A673 (cell line): ENCODE measurements at regions of chr17 and their contacts with region 1.

Region 1: DNA sequence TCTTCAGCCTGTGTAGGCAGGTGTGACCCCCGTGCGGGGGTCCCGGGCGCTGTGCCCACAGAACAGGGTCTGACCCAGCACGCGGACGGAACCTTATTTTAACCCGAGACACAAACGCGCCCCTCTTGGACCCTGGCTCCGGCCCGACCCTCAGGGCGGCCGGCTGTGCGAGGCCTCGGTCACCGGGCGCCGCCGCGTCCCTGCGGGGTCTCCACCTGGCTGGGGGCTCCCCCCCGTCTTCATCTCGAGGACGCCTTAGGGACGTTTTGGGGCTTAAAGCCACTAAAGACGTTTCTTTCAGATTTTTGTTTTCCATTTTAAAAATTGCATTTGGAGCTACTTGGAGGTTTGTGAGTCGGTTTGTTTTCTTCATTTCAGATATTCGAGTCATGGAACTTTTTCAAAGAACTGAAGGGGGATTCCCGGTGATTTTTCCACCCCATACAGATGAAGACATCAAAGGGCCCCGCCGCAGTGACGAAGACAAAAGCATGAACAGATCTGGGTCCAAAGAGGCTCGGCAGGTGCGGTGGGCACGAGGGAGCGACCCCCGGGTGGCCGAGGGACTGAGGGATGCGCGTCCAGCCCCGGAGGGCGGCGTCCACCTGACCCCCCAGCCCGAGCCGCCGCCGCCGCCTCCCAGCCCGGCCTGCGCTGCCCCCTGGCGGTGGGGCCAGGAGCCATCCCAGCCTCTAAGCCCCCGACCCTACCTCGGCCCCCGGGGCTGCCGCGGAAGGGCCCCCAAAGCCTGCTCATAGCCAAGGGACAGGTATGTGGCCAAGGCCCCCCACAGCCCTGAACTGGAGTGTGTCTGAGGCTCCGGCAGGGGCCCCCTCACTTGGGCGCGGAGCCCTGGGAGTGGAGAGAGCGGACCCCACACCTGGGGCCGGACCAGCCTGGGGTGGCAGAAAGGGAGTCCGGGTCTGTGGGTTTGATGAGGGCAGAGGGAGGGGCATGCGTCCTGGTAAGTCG is 3.8 kb upstream of the CD7 start:
- DNase-seq: no peak
- H3K4me3 ChIP-seq: no peak overlapping the region
- H3K27ac ChIP-seq: no peak overlapping the region
- H3K4me1 ChIP-seq: no peaks in the 10 kb centered on the region
- H3K27me3 ChIP-seq: no peaks in the 10 kb centered on the region
- CTCF ChIP-seq: peak; percentile 79

Region 2: DNA sequence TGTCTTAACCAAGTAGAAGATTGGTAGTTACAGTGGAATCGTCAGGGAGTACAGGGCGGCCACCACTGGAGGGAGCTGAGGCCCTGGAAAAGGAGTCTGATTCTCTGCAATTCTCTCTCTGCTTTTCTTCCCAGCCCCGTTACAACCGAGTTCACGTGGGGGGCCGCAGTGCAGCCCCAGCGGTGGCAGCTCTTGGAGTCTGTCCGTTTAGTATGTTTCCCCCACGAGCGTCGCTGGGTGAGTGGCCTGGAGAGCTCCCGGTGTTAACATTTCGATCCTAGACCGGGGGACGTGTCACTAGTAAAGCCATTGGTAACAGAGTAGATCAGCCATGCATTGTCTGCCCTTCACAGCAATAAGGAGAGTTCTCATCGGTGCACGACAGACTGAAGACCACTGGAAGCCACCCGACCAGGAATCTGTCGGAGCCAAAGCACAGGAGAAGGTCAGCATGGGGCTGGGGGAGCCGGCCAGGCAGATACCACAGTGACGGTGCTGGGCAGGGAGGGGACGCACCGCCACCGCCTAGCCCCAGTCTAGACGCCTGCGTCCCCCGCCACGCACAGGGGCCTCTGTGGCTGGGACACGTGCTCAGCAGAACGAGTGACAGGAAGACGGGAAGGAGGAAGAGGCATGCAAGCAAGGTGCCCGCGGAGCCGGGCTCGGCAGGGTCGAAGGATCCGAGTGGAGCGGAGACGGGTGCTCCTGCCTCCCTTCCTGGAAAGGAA is 76.7 kb before region 1 on chr17:
- CTCF ChIA-PET with region 1: no interaction called
- POLR2A ChIA-PET with region 1: no interaction called
- intact Hi-C with region 1: loop called (anchors 2 kb)
- DNase-seq: peak; percentile 79
- H3K4me3 ChIP-seq: no peak overlapping the region
- H3K27ac ChIP-seq: peak overlapping the region; percentile 45
- H3K4me1 ChIP-seq: peaks cover 72% of the 10 kb centered on the region
- H3K27me3 ChIP-seq: no peaks in the 10 kb centered on the region
- CTCF ChIP-seq: peak; percentile 78

Region 3: GRCh38 chr17:82339634-82340580 is 18.7 kb after region 1 on chr17:
- CTCF ChIA-PET with region 1: no interaction called
- POLR2A ChIA-PET with region 1: no interaction called
- intact Hi-C with region 1: no loop called
- DNase-seq: no peak
- H3K4me3 ChIP-seq: peak overlapping the region; percentile 23
- H3K27ac ChIP-seq: no peak overlapping the region
- H3K4me1 ChIP-seq: peaks cover 10% of the 10 kb centered on the region
- H3K27me3 ChIP-seq: no peaks in the 10 kb centered on the region
- CTCF ChIP-seq: no peak